ENCODE measurements at regions of chr2 and their contacts with region 1.

Region 1: DNA sequence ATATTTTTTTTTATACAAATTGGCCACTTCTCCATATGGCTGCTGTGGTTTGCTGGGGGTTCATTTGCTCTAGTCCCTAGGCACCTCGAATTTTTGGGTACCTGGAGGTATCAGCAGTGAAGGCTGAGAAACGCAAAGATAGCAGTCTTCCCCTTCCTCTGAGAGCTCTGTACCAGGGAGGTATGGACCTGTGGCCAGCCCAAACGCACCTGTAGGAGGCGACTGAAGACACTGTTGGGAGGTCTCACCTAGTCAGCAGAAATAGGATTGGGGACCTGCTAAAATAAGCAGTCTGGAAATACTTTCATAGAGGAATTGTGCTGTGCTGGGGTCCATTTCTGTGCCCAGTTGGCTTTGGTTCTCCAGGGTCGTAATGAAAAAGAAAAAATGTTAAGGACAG is 292.2 kb upstream of the CYP26B1 start:
- DNase-seq: no peak
- H3K4me3 ChIP-seq: no peak overlapping the region
- H3K27ac ChIP-seq: no peak overlapping the region
- H3K4me1 ChIP-seq: no peaks in the 10 kb centered on the region
- H3K27me3 ChIP-seq: no peaks in the 10 kb centered on the region
- CTCF ChIP-seq: no peak

Region 2: GRCh38 chr2:72414137-72414760 is 25.6 kb before region 1 on chr2:
- CTCF ChIA-PET with region 1: no interaction called
- POLR2A ChIA-PET with region 1: interaction called, 10 read pairs
- intact Hi-C with region 1: no loop called
- DNase-seq: no peak
- H3K4me3 ChIP-seq: no peak overlapping the region
- H3K27ac ChIP-seq: no peak overlapping the region
- H3K4me1 ChIP-seq: no peaks in the 10 kb centered on the region; the same call in 1 of the 2 replicates
- H3K27me3 ChIP-seq: no peaks in the 10 kb centered on the region
- CTCF ChIP-seq: no peak

Measured in PC-9 (cell line).